Mammary epithelial cell (primary cell): ENCODE measurements at regions of chr1 and their contacts with region 1.

Region 1: GRCh38 chr1:116881879-116882520 is 27.7 kb upstream of the PTGFRN start:
- DNase-seq: peak; percentile 50
- H3K4me3 ChIP-seq: no peak overlapping the region
- H3K27ac ChIP-seq: no peak overlapping the region
- H3K4me1 ChIP-seq: peaks cover 42% of the 10 kb centered on the region
- H3K27me3 ChIP-seq: no peaks in the 10 kb centered on the region
- CTCF ChIP-seq: peak; percentile 25 to 65

Region 2: DNA sequence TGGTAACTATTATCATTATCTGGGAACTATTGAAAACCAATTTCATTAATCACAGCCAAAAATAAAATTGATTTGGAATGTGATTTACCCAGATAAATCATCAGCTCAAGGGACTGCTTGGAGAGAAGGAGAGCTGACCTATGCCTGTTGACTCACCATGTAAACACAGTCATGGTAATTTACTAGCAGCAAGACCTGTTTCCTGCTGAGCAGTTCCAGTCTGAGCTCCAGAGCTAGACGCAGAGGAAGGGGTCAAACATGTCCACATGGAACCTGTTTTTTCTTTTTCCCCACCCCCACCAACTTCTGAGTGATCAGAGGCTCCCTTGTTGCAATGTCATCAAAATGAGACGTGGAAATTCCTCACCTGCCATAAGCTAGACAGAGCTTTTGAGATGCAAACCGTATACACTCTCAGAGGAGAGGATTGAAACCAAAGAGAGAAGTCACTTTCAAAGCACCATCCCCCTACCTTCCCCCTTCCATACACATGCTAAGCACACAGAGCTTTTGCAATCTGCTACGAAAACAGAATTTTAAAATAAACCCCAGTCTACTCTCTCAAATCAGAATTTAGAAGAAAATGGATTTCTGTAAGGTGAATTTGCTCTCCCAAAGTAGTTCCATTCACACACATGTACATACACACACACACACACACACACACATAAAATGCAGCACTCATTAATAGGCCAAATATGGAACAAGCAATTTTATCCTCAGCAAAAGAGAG is 28.2 kb before region 1 on chr1:
- CTCF ChIA-PET with region 1: no interaction called
- dilution Hi-C with region 1: no loop called
- in situ Hi-C with region 1: no loop called
- intact Hi-C with region 1: loop called (anchors 2 kb)
- DNase-seq: peak; percentile 83
- H3K4me3 ChIP-seq: no peak overlapping the region
- H3K27ac ChIP-seq: no peak overlapping the region
- H3K4me1 ChIP-seq: peaks cover 31% of the 10 kb centered on the region
- H3K27me3 ChIP-seq: no peaks in the 10 kb centered on the region
- CTCF ChIP-seq: no peak

Region 3: GRCh38 chr1:116909510-116910378 is 27.7 kb after region 1 on chr1 and contains the start of gene PTGFRN:
- CTCF ChIA-PET with region 1: no interaction called
- dilution Hi-C with region 1: no loop called
- in situ Hi-C with region 1: no loop called
- intact Hi-C with region 1: loop called (anchors 1 kb)
- DNase-seq: peak; percentile 81
- H3K4me3 ChIP-seq: peak within 1 kb of the TSS; percentile 63 to 82 (median 80)
- H3K27ac ChIP-seq: peak within 1 kb of the TSS; percentile 80
- H3K4me1 ChIP-seq: peaks cover 62% of the 10 kb centered on the region
- H3K27me3 ChIP-seq: no peaks in the 10 kb centered on the region
- CTCF ChIP-seq: no peak
- total RNA-seq, gene PTGFRN: 143 to 150 TPM

Region 4: GRCh38 chr1:116990612-116991151 is 108.7 kb after region 1 on chr1:
- CTCF ChIA-PET with region 1: no interaction called
- dilution Hi-C with region 1: no loop called
- in situ Hi-C with region 1: no loop called
- intact Hi-C with region 1: loop called (anchors 5 kb)
- DNase-seq: peak; percentile 97
- H3K4me3 ChIP-seq: no peak overlapping the region
- H3K27ac ChIP-seq: peak overlapping the region; percentile 74
- H3K4me1 ChIP-seq: peaks cover 46% of the 10 kb centered on the region
- H3K27me3 ChIP-seq: no peaks in the 10 kb centered on the region
- CTCF ChIP-seq: no peak

Region 5: DNA sequence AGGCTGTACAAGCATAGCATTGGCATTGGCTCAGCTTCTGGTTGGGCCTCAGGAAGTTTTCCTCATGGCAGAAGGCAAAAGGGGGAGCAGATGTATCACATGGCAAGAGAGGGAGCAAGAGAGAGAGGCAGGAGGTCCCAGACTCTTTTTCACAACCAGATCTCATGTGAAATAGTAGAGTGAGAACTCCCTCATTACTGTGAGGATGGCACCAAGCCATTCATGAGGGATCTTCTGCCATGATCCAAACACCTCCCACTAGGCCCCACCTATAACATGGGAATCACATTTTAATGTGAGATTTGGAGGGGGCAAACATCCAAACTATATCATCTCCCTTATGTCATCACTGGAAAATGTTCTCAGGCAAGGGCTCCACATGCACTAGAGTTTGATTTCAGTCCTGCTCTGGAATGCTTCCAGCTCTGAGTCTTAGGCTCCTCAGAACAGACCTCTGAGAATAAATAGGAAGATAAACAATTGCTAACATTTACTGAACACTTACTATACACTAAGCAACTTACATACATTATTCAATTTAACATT is 368.1 kb after region 1 on chr1:
- CTCF ChIA-PET with region 1: no interaction called
- dilution Hi-C with region 1: no loop called
- in situ Hi-C with region 1: no loop called
- intact Hi-C with region 1: no loop called
- DNase-seq: no peak
- H3K4me3 ChIP-seq: no peak overlapping the region
- H3K27ac ChIP-seq: no peak overlapping the region
- H3K4me1 ChIP-seq: no peaks in the 10 kb centered on the region
- H3K27me3 ChIP-seq: peaks cover 3% of the 10 kb centered on the region
- CTCF ChIP-seq: no peak